ENCODE measurements at regions of chr2 and their contacts with region 1.

Region 1: GRCh38 chr2:205539601-205540000 is 142.7 kb upstream of the NRP2 start:
- DNase-seq: no peak
- ATAC-seq: no peak
- H3K4me3 ChIP-seq: no peak overlapping the region
- H3K27ac ChIP-seq: no peak overlapping the region
- H3K4me1 ChIP-seq: no peaks in the 10 kb centered on the region
- H3K27me3 ChIP-seq: no peaks in the 10 kb centered on the region
- CTCF ChIP-seq: no peak
- POLR2A ChIP-seq: no peak
- RAD21 ChIP-seq: no peak

Region 2: DNA sequence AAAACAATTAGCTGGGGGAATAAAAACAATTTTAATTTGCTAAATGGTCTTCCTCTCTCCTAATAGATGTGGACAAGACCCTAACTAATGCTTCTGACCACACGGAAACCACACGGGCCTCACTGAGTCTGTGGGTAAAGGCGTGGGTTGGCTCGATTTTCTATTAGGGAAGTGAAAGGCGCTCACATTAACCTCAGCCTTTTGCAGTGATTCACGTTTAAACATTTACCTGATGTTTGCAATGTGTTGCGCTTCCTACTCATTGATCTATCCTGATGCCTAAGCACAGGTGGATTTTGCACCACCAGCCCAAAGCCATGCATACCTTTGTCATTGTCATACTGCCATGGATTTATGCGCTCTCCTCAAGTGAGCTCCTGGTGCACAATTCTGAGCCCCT is 107.1 kb after region 1 on chr2:
- CTCF ChIA-PET with region 1: no interaction called
- POLR2A ChIA-PET with region 1: no interaction called
- dilution Hi-C with region 1: no loop called
- in situ Hi-C with region 1: loop called (anchors 25 kb)
- intact Hi-C with region 1: no loop called
- DNase-seq: no peak
- ATAC-seq: no peak
- H3K4me3 ChIP-seq: no peak overlapping the region
- H3K27ac ChIP-seq: no peak overlapping the region
- H3K4me1 ChIP-seq: peaks cover 5% of the 10 kb centered on the region
- H3K27me3 ChIP-seq: no peaks in the 10 kb centered on the region
- CTCF ChIP-seq: no peak
- POLR2A ChIP-seq: no peak
- RAD21 ChIP-seq: no peak